CD14-positive monocyte (primary cell): ENCODE measurements at regions of chr6 and their contacts with region 1.

Region 1: GRCh38 chr6:130525408-130525807 is 159.6 kb downstream of the TMEM200A start:
- DNase-seq: no peak
- H3K4me3 ChIP-seq: no peak overlapping the region
- H3K4me3 Mint-ChIP-seq: no peak overlapping the region
- H3K27ac ChIP-seq: no peak overlapping the region
- H3K27ac Mint-ChIP-seq: no peak overlapping the region
- H3K4me1 ChIP-seq: no peaks in the 10 kb centered on the region
- H3K4me1 Mint-ChIP-seq: peaks cover 2% of the 10 kb centered on the region
- H3K27me3 ChIP-seq: no peaks in the 10 kb centered on the region
- H3K27me3 Mint-ChIP-seq: peaks cover 0 to 4% (median 0%) of the 10 kb centered on the region in 3 donors
- CTCF ChIP-seq: no peak

Region 2: DNA sequence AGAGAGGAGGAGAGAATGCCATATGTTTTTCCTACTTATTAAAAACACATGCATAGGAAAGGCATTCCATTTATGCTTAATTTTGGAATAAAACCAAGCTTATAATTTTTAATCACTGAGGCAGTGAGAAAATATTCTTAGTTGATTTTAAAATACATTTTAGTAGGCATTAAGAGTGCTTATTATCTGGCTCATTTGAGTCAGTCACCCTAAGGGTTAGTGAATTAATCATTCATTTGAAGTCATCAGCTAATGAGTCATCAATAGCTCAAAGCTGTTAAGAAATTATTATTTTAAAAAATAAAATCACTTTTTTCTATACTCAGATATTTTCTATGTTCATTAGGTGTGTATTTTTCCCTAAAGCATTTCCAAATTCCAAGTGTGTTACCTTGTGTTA is 78.0 kb before region 1 on chr6:
- intact Hi-C with region 1: loop called in 1 of 2 experiments (anchors 10 kb)
- DNase-seq: no peak
- H3K4me3 ChIP-seq: no peak overlapping the region
- H3K4me3 Mint-ChIP-seq: no peak overlapping the region
- H3K27ac ChIP-seq: no peak overlapping the region
- H3K27ac Mint-ChIP-seq: no peak overlapping the region
- H3K4me1 ChIP-seq: no peaks in the 10 kb centered on the region
- H3K4me1 Mint-ChIP-seq: no peaks in the 10 kb centered on the region
- H3K27me3 ChIP-seq: no peaks in the 10 kb centered on the region
- H3K27me3 Mint-ChIP-seq: peaks cover 0 to 1% (median 0%) of the 10 kb centered on the region in 3 donors
- CTCF ChIP-seq: no peak